ENCODE measurements at regions of chrX and their contacts with region 1.

Region 1: GRCh38 chrX:109155161-109155560 is 326.7 kb downstream of the GUCY2F start:
- DNase-seq: no peak
- ATAC-seq: no peak
- H3K4me3 ChIP-seq: no peak overlapping the region
- H3K27ac ChIP-seq: no peak overlapping the region
- H3K4me1 ChIP-seq: no peaks in the 10 kb centered on the region
- H3K27me3 ChIP-seq: no peaks in the 10 kb centered on the region
- CTCF ChIP-seq: no peak
- POLR2A ChIP-seq: no peak

Region 2: GRCh38 chrX:109261279-109261678 is 106.1 kb after region 1 on chrX:
- in situ Hi-C with region 1: no loop called
- intact Hi-C with region 1: loop called (anchors 5 kb)
- DNase-seq: no peak
- ATAC-seq: no peak
- H3K4me3 ChIP-seq: no peak overlapping the region
- H3K27ac ChIP-seq: no peak overlapping the region
- H3K4me1 ChIP-seq: no peaks in the 10 kb centered on the region
- H3K27me3 ChIP-seq: peaks cover 0 to 3% (median 0%) of the 10 kb centered on the region in 3 donors
- CTCF ChIP-seq: no peak
- POLR2A ChIP-seq: no peak

Measured in gastrocnemius medialis (tissue), 4 donors.